Transverse colon (tissue), 4 donors: ENCODE measurements at regions of chr6 and their contacts with region 1.

Region 1: DNA sequence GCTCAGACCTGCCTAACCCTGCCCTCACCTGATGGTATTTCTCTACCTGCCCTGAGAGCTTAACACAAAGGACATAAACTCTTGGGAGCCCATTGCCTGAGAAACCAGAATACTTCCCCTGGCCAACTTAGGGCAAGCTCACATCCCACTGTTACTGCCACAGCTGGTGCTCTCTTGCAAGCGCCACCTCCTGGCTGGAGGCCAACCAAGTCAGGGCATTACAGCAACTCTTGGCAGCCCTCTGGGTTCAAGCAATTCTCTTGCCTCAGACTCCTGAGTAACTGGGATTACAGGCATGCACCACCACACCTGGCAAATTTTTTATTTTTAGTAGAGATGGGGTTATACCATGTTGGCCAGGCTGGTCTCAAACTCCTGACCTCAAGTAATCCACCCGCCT is 70.1 kb downstream of the HECA start:
- DNase-seq: no peak
- H3K4me3 ChIP-seq: no peak overlapping the region
- H3K27ac ChIP-seq: no peak overlapping the region
- H3K4me1 ChIP-seq: no peaks in the 10 kb centered on the region
- H3K27me3 ChIP-seq: no peaks in the 10 kb centered on the region
- CTCF ChIP-seq: no peak
- EP300 ChIP-seq: no peak
- POLR2A ChIP-seq: no peak

Region 2: GRCh38 chr6:139230391-139230840 is 25.4 kb after region 1 on chr6:
- in situ Hi-C with region 1: no loop called
- intact Hi-C with region 1: loop called (anchors 1 kb)
- DNase-seq: no peak
- H3K4me3 ChIP-seq: no peak overlapping the region
- H3K27ac ChIP-seq: no peak overlapping the region
- H3K4me1 ChIP-seq: no peaks in the 10 kb centered on the region
- H3K27me3 ChIP-seq: no peaks in the 10 kb centered on the region
- CTCF ChIP-seq: no peak
- EP300 ChIP-seq: no peak
- POLR2A ChIP-seq: no peak